WTC11 (cell line): ENCODE measurements at regions of chr17 and their contacts with region 1.

Region 1: DNA sequence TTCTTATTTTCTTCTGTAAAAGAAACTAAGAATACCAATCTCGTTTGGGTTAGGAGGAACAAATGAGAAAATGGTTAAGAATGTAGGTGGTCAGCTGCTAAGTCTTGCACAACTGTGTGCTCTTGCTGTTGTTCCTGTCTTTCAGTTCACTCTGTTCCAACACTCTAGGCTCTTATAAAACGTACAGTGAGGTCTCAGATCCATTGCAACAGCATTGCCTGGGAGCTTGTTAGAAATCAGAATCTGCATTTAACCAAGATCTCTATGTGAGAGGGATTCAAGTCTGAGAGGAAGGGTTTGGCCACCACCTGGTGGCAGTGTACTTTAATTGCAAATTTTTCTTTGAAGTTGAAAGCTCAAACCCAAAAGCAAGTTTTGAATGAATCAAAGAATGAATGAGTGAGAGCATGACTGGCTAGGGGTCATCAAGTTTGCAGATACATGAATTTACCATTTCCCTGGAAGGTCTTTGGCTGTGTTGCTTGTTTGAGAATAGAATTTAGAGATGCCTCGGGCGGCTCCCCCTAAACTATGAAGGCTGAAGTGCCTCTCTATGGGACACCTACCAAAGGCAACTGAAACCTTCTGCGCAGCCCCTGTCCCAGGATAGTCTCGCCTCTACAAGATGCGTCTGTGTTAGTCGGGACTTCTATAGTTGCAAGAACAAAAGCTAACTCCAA is 2.5 kb downstream of the ALOX15B start:
- DNase-seq: no peak
- ATAC-seq: peak; percentile 16; the same call in 1 of the 2 replicates
- H3K4me3 Mint-ChIP-seq: no peak overlapping the region
- H3K27ac Mint-ChIP-seq: no peak overlapping the region
- H3K4me1 Mint-ChIP-seq: peaks cover 22% of the 10 kb centered on the region
- H3K27me3 Mint-ChIP-seq: peaks cover 14% of the 10 kb centered on the region
- CTCF ChIP-seq: 0 out of 2 replicates have a peak, but pooled peaks have one; percentile 21

Region 2: DNA sequence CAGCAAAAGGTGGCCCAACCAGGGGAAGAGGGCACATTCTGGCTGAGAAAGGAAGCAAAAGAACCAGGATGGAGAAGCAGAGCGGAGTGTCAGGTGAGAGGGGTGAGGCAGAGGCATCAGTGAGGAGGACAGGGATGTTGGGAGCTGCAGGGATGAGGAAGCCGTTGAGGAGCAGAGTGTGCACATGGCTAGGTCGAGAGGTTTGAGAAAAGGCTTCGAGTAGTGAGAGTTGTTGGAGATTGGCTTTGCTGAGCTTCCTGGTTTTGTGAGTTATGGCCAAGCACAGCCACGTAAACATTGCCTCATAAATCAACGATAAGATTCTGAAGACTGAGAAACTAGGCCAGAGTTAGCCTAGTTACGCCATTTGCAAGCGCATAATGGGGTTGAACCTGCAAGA is 297.0 kb before region 1 on chr17:
- CTCF ChIA-PET with region 1: interaction called, 17 read pairs
- POLR2A ChIA-PET with region 1: no interaction called
- DNase-seq: no peak
- ATAC-seq: no peak
- H3K4me3 Mint-ChIP-seq: no peak overlapping the region
- H3K27ac Mint-ChIP-seq: no peak overlapping the region
- H3K4me1 Mint-ChIP-seq: no peaks in the 10 kb centered on the region
- H3K27me3 Mint-ChIP-seq: peaks cover 12% of the 10 kb centered on the region
- CTCF ChIP-seq: no peak

Region 3: DNA sequence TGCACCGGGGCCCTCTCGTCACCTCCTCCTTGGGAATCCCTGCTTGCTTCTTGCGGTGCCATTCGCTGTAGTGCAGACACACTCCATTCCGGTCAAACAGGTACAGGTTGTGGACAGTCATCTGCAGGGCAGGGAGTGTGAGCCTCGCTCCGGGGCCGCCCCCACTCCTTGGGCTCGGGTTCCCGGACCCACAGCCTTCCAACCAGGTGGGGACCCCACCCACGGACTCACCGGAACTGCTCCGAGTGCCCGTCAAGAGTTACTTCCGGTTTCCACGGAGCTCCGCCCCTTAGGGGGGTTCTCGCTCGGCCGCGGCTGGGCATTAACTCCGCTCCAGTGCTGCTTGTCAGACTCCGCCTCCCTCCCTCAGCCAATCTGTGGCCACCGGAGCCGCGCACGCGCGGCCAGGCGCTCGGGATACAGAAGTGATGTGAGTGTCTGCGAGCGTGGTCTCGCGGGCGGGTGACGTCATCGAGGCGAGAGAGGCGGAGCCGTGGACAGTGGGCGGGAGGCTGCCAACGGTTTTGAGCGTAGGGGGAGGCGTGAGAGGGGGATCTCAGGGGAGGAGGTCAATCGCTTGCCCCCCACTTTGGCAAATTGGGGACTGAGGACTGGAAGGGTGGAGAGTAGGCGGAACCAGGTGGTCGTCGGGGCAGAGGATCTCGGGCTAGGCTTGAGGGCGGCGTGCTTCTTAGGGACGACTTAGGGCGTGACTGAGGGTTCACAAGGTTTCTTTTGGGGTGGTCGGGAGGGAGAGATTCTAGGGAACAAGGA is 109.5 kb before region 1 on chr17 and contains the starts of genes CNTROB and TRAPPC1:
- CTCF ChIA-PET with region 1: interaction called, 33 read pairs
- POLR2A ChIA-PET with region 1: no interaction called
- DNase-seq: peak; percentile 98
- ATAC-seq: peak; percentile 90
- H3K4me3 Mint-ChIP-seq: peak within 1 kb of the TSS; percentile 100
- H3K27ac Mint-ChIP-seq: peak within 1 kb of the TSS; percentile 97
- H3K4me1 Mint-ChIP-seq: peaks cover 32% of the 10 kb centered on the region
- H3K27me3 Mint-ChIP-seq: peaks cover 37% of the 10 kb centered on the region
- CTCF ChIP-seq: no peak
- total RNA-seq, gene CNTROB: 37.0 to 39.7 TPM (median 38.5 TPM) in 3 replicates
- total RNA-seq, gene TRAPPC1: 99.7 to 135 TPM (median 125 TPM) in 3 replicates

Region 4: DNA sequence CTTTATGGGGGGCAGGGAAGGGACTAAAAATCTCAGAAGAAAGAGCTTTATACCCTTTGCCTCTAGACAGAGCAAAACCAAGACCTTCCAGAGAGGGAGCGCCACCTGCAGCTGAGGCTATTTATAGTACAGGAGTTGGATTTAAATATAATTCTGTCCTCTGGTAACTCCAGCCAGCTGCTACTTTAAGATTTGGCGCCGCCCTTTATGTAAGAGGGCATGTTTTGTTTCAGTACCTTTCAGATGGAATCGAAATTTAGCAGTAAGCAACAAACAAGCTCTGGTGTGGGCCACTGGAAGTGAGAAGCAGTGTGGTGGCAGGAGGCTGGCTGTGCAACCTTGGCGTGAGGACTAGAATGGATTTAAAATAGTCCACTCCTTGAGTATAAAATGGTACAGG is 44.2 kb before region 1 on chr17:
- CTCF ChIA-PET with region 1: interaction called, 18 read pairs
- POLR2A ChIA-PET with region 1: no interaction called
- DNase-seq: peak; percentile 69
- ATAC-seq: peak; percentile 92
- H3K4me3 Mint-ChIP-seq: no peak overlapping the region
- H3K27ac Mint-ChIP-seq: peak overlapping the region; percentile 27; the same call in 1 of the 2 replicates
- H3K4me1 Mint-ChIP-seq: peaks cover 9% of the 10 kb centered on the region
- H3K27me3 Mint-ChIP-seq: peaks cover 26% of the 10 kb centered on the region
- CTCF ChIP-seq: 0 out of 2 replicates have a peak, but pooled peaks have one; percentile 19

Region 5: DNA sequence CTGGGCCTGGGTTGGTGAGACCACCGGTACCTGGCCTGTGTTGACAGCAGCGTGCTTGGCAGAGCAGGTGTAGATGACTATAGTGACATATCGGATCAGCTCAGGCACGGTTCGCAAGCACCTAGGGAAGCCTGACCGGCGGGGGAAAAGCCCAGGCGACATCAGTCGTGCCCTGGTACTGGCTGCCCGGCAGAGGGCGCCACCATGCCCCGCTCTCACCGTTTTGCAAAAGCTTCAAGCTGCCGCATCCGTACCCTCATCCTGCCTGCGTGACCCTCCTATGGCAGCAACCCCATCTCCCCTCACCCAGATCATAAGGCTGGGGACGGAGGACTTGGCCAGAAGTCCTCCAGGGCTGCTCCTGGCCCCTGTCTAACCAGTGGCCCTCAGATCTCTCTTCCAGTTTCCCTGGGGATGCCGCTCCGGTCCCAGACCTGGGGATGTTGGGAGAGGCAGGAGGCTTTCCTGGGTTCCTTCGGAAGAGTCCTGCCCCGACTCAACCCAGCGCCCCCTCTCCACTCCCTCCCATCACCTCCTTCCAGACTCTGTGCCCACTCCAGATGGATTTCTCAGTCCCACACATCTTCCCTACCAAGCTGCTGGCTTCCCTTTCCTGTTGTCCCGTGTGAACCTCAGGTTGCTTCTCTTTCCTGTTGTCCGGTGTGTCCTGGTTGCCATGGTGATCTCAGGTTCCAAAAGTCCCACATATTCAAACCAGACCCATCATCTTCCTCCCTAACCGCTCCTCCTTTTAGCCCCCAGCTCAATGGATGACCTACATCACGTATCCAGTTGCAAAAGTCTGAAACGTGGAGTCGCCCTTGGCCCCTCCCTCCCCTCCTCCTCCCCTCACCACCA is 32.5 kb after region 1 on chr17:
- CTCF ChIA-PET with region 1: interaction called, 19 read pairs
- POLR2A ChIA-PET with region 1: no interaction called
- DNase-seq: peak; percentile 92
- ATAC-seq: peak; percentile 82
- H3K4me3 Mint-ChIP-seq: peak overlapping the region; percentile 76
- H3K27ac Mint-ChIP-seq: no peak overlapping the region
- H3K4me1 Mint-ChIP-seq: peaks cover 23% of the 10 kb centered on the region
- H3K27me3 Mint-ChIP-seq: peaks cover 96% of the 10 kb centered on the region
- CTCF ChIP-seq: peak; percentile 89

Region 6: DNA sequence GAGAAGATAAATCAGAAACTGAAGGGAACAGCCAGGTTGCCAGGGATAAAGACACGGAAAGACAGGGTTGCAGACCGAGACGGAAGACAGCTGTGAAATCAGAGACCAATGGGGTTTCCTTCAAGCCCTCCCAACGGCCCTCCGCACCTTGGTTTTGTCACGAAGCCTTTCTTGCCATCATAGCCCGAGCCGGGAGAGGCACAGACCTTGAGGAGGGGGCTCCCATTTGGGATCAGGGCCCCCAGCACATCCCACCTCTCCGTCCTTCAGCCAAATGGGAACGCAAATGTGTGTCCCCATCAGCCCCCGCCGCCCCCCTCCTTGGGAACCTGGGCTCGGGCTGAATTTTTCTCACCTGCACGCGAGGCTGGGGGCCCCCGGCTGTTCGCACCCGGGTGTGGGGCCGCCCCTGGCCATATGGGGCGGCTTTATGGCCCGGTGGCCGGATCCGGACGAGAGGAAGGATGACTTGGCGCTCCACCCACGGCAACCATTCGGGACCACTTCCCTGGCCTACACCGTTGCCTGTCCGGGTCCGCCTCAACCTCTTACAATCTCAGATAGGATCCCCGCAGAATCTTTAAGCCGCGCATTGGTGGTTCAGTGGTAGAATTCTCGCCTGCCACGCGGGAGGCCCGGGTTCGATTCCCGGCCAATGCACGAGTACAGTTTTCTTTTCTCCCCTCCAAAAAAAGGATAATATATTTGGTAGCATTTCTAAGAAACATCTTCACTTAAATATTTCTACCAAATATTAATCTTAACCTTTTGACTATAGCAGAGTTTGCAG is 84.0 kb after region 1 on chr17:
- CTCF ChIA-PET with region 1: no interaction called
- POLR2A ChIA-PET with region 1: no interaction called
- DNase-seq: peak; percentile 86
- ATAC-seq: peak; percentile 1
- H3K4me3 Mint-ChIP-seq: peak overlapping the region; percentile 85
- H3K27ac Mint-ChIP-seq: no peak overlapping the region
- H3K4me1 Mint-ChIP-seq: peaks cover 20% of the 10 kb centered on the region
- H3K27me3 Mint-ChIP-seq: peaks cover 81% of the 10 kb centered on the region
- CTCF ChIP-seq: no peak